Heart left ventricle (tissue), 16 donors: ENCODE measurements at regions of chr17 and their contacts with region 1.

Region 1: DNA sequence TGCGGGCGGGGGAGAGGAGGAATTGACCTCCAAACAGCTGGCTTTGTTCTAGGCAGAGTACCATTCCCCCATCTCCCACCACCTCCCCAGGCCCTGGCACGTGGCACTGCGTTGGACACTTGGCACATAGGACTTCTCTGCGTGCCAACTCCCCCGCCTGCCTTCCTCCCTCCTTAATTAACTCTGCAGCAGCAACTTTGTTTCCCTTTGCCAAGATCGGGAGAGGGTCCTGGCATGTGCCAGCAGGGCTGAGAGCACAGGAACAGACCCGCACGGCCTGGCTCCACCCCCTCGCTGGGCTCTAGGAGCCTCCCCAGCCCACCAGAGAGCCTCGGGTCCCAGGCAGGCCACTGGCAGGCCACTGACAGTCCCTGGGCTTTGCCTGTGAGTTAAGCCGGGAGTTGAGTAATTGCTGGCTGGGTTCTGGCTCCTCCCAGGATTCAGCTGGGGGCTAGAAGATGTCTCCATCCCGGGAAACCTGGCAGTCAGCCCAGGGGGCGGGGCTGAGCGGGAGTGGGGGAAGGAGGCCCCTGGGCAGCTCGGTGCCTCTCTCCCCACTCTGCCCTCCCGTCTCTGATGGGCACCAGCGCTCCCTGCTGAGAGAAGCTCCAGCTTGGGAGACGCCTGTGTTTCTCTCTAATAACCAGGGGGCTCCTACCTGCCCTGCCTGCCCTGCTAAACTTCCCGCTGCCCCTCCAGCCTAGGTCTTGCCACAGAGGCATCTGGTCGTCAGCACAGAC is 224.0 kb upstream of the TNRC6C start:
- DNase-seq: peak; percentile 92 to 96 (median 93)
- ATAC-seq: peak; percentile 74 to 84 (median 82)
- H3K4me3 ChIP-seq: peak overlapping the region in 6 of 12 donors; percentile 7 to 28 (median 16)
- H3K27ac ChIP-seq: peak overlapping the region; percentile 78 to 97 (median 86)
- H3K4me1 ChIP-seq: peaks cover 0 to 55% (median 42%) of the 10 kb centered on the region in 12 donors
- H3K27me3 ChIP-seq: no peaks in the 10 kb centered on the region
- CTCF ChIP-seq: peak in 5 of 12 donors; percentile 6 to 46 (median 23)
- POLR2A ChIP-seq: no peak

Region 2: GRCh38 chr17:77602062-77602746 is 132.3 kb before region 1 on chr17:
- intact Hi-C with region 1: loop called in 4 of 10 experiments (anchors 2 to 5 kb)
- DNase-seq: peak in 4 of 5 donors; percentile 75 to 90 (median 83)
- ATAC-seq: peak; percentile 94 to 96 (median 95)
- H3K4me3 ChIP-seq: peak overlapping the region in 1 of 12 donors; percentile 1
- H3K27ac ChIP-seq: peak overlapping the region; percentile 81 to 98 (median 92)
- H3K4me1 ChIP-seq: peaks cover 0 to 37% (median 28%) of the 10 kb centered on the region in 12 donors
- H3K27me3 ChIP-seq: no peaks in the 10 kb centered on the region
- CTCF ChIP-seq: no peak
- POLR2A ChIP-seq: no peak

Region 3: DNA sequence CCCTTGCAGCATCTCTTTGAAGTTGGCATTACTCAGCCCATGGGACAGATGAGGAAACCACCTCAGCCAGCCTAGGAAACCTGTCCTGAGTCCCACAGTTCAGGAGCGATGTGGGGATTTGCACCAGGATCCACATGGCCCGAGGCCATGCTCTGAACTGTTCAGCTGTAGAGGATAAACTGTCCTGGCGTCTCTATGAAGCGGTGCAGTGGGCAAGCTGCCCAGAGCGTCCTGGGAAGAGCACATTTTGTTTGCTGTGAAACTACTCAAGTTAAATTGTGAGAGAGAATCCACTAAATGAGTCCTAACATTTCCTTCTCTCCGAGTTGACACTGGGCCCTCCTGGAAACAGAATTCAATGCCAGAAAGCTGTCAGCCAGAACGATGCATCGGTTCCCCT is 52.6 kb before region 1 on chr17:
- intact Hi-C with region 1: loop called in 2 of 10 experiments (anchors 5 kb)
- DNase-seq: peak; percentile 46 to 90 (median 78)
- ATAC-seq: peak; percentile 73 to 81 (median 77)
- H3K4me3 ChIP-seq: no peak overlapping the region
- H3K27ac ChIP-seq: peak overlapping the region in 7 of 12 donors; percentile 0 to 55 (median 29)
- H3K4me1 ChIP-seq: peaks cover 0 to 36% (median 5%) of the 10 kb centered on the region in 12 donors
- H3K27me3 ChIP-seq: no peaks in the 10 kb centered on the region
- CTCF ChIP-seq: no peak
- POLR2A ChIP-seq: no peak

Region 4: GRCh38 chr17:77778636-77779489 is 44.4 kb after region 1 on chr17:
- intact Hi-C with region 1: no loop called
- DNase-seq: peak; percentile 80 to 91 (median 82)
- ATAC-seq: peak; percentile 94 to 97 (median 96)
- H3K4me3 ChIP-seq: peak overlapping the region in 5 of 12 donors; percentile 16 to 36 (median 22)
- H3K27ac ChIP-seq: peak overlapping the region in 11 of 12 donors; percentile 22 to 85 (median 71)
- H3K4me1 ChIP-seq: peaks cover 0 to 29% (median 21%) of the 10 kb centered on the region in 12 donors
- H3K27me3 ChIP-seq: no peaks in the 10 kb centered on the region
- CTCF ChIP-seq: no peak
- POLR2A ChIP-seq: no peak

Region 5: DNA sequence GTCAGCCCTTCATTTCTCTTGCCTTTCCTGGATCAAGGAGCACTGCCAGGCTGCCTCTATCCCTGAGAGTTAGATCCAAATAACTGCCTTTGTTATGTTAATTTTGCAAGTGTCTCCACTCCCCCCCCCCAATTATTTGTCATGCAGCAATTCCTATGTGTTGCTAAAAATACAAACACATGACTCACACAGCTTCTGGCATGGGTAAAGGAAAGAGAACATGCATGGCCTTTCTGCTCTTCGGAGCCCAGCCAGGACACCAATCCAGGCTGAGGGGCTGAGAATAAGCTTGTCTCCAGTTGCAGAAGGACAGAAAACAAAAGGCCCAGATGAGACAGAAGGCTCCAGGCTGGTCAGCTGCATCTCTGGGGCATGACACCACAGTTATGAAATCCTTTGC is 76.0 kb after region 1 on chr17:
- intact Hi-C with region 1: loop called in 1 of 10 experiments (anchors 10 kb)
- DNase-seq: peak in 4 of 5 donors; percentile 50 to 67 (median 62)
- ATAC-seq: peak; percentile 83 to 94 (median 91)
- H3K4me3 ChIP-seq: no peak overlapping the region
- H3K27ac ChIP-seq: peak overlapping the region in 11 of 12 donors; percentile 15 to 68 (median 46)
- H3K4me1 ChIP-seq: peaks cover 8 to 25% (median 20%) of the 10 kb centered on the region in 12 donors
- H3K27me3 ChIP-seq: no peaks in the 10 kb centered on the region
- CTCF ChIP-seq: no peak
- POLR2A ChIP-seq: no peak